GM10248 (cell line): ENCODE measurements at regions of chr2 and their contacts with region 1.

Region 1: GRCh38 chr2:125330133-125330532 is 1305.0 kb downstream of the CNTNAP5 start:
- DNase-seq: no peak
- CTCF ChIP-seq: no peak

Region 2: DNA sequence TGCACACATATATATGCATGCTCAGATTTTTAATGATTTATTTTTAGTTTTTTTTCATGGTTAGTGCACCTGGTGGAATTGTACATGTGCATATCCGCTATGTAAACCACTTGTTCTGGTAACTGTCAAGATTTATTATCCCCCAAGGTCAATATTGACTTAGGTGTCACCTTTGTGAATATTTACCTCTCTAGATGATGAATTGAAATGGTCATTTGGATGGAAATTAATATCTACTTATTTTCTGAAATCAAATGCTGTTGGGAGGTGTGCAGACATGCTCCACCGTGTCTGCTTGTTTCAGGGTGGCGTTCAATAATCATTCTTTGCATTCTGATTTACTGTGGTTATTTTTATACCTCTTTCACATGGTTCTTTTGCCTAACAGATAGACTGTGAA is 1290.3 kb before region 1 on chr2:
- CTCF ChIA-PET with region 1: no interaction called
- POLR2A ChIA-PET with region 1: no interaction called
- DNase-seq: no peak
- CTCF ChIP-seq: no peak

Region 3: DNA sequence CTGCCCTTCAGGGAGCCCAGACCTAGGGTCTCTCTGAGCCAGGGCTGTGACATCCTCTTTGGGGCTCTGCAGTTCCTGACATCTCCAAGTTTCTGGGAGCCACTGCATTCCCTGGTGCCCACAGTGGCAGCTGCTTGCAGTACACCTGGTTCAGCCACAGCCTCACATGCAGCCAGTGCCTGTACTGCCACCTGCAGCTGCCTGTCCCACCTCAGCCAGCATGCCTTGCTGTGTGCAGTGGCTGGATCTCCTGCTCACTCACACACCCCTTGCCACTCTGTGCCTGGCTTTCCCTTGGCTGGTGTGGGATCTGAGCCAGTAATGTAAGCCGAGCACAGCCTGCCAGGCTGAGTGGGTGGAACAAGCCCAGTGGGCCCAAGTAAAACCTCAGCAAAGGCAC is 16.3 kb before region 1 on chr2:
- CTCF ChIA-PET with region 1: interaction called, 10 read pairs
- POLR2A ChIA-PET with region 1: no interaction called
- DNase-seq: no peak
- CTCF ChIP-seq: no peak

Region 4: GRCh38 chr2:125341353-125341752 is 11.2 kb after region 1 on chr2:
- CTCF ChIA-PET with region 1: no interaction called
- POLR2A ChIA-PET with region 1: no interaction called
- DNase-seq: no peak
- CTCF ChIP-seq: no peak